ENCODE measurements at regions of chr11 and their contacts with region 1.

Region 1: DNA sequence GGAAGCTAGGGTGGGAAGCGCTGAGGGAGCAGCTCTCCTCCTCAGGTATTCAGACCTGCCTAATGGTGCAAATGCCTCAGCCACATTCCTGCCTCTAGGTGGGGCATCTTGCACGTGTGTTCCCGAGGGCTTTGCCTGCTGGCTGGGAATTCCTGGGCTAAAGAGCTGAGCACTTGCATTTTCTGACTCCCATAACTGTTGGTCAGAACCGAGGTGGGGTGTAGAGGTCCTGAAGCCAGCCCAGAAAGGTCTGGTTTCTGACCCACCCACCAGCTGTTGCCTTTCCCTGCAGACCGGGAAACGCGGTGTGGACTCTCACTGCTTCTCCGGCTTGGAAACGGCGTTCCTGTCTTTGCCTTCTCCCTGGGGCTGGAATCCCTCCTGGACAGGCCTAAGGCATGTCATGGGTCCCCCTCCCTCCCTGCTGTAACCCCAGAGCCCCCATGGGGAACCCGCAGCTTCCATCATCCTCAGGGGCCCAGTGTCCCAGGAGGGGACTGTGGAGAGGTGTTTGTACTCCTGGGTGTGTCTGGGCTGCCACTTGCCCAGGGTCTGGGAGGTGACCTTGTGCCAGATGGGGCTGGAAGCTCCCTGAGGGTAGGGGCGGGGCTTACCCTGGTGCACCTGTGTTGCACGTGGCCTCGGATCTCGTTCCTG is 24.0 kb upstream of the SMIM38 start:
- DNase-seq: no peak
- H3K4me3 ChIP-seq: no peak overlapping the region
- H3K27me3 ChIP-seq: no peaks in the 10 kb centered on the region
- CTCF ChIP-seq: peak; percentile 90

Region 2: GRCh38 chr11:68763926-68764639 is 367.7 kb before region 1 on chr11:
- CTCF ChIA-PET with region 1: no interaction called
- POLR2A ChIA-PET with region 1: no interaction called
- DNase-seq: no peak
- H3K4me3 ChIP-seq: no peak overlapping the region
- H3K27me3 ChIP-seq: no peaks in the 10 kb centered on the region
- CTCF ChIP-seq: peak; percentile 16; the same call in 1 of the 2 replicates

Region 3: DNA sequence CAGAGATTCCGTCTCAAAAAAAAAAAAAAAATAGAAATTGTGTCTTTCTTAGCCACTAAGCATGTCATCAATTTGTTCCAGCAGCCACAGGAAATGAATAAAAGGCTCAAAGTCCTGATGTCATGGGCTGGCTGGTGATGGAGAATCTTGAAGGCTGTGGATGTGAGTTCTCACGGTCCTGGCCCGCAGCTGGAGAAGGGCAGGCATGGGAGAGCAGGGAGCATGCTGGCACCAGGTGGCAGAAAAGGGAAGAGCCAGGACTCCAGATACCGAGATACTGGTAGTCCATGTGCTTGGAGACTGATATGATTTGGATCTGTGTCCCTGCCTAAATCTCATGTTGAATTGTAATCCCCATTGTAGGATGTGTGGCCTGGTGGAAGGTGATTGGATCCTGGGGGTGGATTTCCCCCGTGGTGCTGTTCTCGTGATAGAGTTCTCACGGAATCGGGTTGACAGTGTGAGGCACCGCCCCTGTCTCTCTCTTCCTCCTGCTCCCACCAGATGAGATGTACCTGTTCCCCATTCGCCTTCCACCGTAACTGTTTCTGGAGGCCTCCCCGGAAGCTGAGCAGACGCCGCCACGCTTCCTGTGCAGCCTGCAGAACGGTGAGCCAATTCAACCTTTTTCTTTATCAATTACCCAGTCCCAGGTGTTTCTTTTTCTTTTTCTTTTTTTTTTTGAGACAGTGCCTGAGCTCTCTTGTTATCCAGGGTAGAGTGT is 169.1 kb before region 1 on chr11:
- CTCF ChIA-PET with region 1: no interaction called
- POLR2A ChIA-PET with region 1: no interaction called
- DNase-seq: no peak
- H3K4me3 ChIP-seq: no peak overlapping the region
- H3K27me3 ChIP-seq: peaks cover 8% of the 10 kb centered on the region
- CTCF ChIP-seq: no peak

Region 4: GRCh38 chr11:69145062-69145405 is 13.3 kb after region 1 on chr11:
- CTCF ChIA-PET with region 1: interaction called, 20 read pairs
- POLR2A ChIA-PET with region 1: no interaction called
- DNase-seq: no peak
- H3K4me3 ChIP-seq: no peak overlapping the region
- H3K27me3 ChIP-seq: no peaks in the 10 kb centered on the region; the same call in 1 of the 2 replicates
- CTCF ChIP-seq: no peak

Region 5: GRCh38 chr11:69240332-69241074 is 108.7 kb after region 1 on chr11:
- CTCF ChIA-PET with region 1: interaction called, 13 read pairs
- POLR2A ChIA-PET with region 1: no interaction called
- DNase-seq: no peak
- H3K4me3 ChIP-seq: no peak overlapping the region
- H3K27me3 ChIP-seq: peaks cover 6% of the 10 kb centered on the region
- CTCF ChIP-seq: peak; percentile 52

Region 6: GRCh38 chr11:69296890-69297786 is 165.4 kb after region 1 on chr11:
- CTCF ChIA-PET with region 1: interaction called, 14 read pairs
- POLR2A ChIA-PET with region 1: no interaction called
- DNase-seq: peak; percentile 98
- H3K4me3 ChIP-seq: no peak overlapping the region
- H3K27me3 ChIP-seq: no peaks in the 10 kb centered on the region
- CTCF ChIP-seq: no peak

Region 7: GRCh38 chr11:69670158-69670845 is 538.5 kb after region 1 on chr11:
- CTCF ChIA-PET with region 1: interaction called, 16 read pairs
- POLR2A ChIA-PET with region 1: no interaction called
- DNase-seq: no peak
- H3K4me3 ChIP-seq: no peak overlapping the region
- H3K27me3 ChIP-seq: no peaks in the 10 kb centered on the region
- CTCF ChIP-seq: peak; percentile 97